Activated naive CD4-positive, alpha-beta T cell treated with anti-CD3 and anti-CD28 coated beads, Interleukin-2, amount 10 ng/mL, durations not matched to agents 7 days and 5 days (primary cell): ENCODE measurements at regions of chr5 and their contacts with region 1.

Region 1: GRCh38 chr5:42989190-42989589 is 50.9 kb downstream of the ANXA2R start:
- DNase-seq: no peak
- H3K4me3 Mint-ChIP-seq: peak overlapping the region; percentile 97
- H3K27ac Mint-ChIP-seq: peak overlapping the region; percentile 86
- H3K4me1 Mint-ChIP-seq: peaks cover 60% of the 10 kb centered on the region
- H3K27me3 Mint-ChIP-seq: peaks cover 7% of the 10 kb centered on the region

Region 2: GRCh38 chr5:42908509-42909488 is 80.4 kb before region 1 on chr5:
- CTCF ChIA-PET with region 1: interaction called, 11 read pairs
- DNase-seq: peak; percentile 94
- H3K4me3 Mint-ChIP-seq: peak overlapping the region; percentile 81
- H3K27ac Mint-ChIP-seq: peak overlapping the region; percentile 46
- H3K4me1 Mint-ChIP-seq: peaks cover 21% of the 10 kb centered on the region
- H3K27me3 Mint-ChIP-seq: peaks cover 45% of the 10 kb centered on the region